ENCODE measurements at regions of chr12 and their contacts with region 1.

Region 1: GRCh38 chr12:54723379-54724256 is 75.5 kb upstream of the DCD start:
- DNase-seq: peak; percentile 32
- H3K4me3 Mint-ChIP-seq: no peak overlapping the region
- H3K27ac Mint-ChIP-seq: no peak overlapping the region
- H3K4me1 Mint-ChIP-seq: peaks cover 13% of the 10 kb centered on the region
- H3K27me3 Mint-ChIP-seq: peaks cover 2% of the 10 kb centered on the region

Region 2: GRCh38 chr12:54734196-54734950 is 10.8 kb after region 1 on chr12:
- CTCF ChIA-PET with region 1: interaction called, 18 read pairs
- POLR2A ChIA-PET with region 1: no interaction called
- intact Hi-C with region 1: no loop called
- DNase-seq: no peak
- H3K4me3 Mint-ChIP-seq: no peak overlapping the region
- H3K27ac Mint-ChIP-seq: no peak overlapping the region
- H3K4me1 Mint-ChIP-seq: peaks cover 25% of the 10 kb centered on the region
- H3K27me3 Mint-ChIP-seq: no peaks in the 10 kb centered on the region